Naive thymus-derived CD8-positive, alpha-beta T cell (primary cell): ENCODE measurements at regions of chr5 and their contacts with region 1.

Region 1: GRCh38 chr5:79235634-79236363 is at the start of gene JMY:
- DNase-seq: peak; percentile 76 to 93 (median 86)
- ATAC-seq: peak; percentile 81 to 84
- H3K4me3 Mint-ChIP-seq: peak within 1 kb of the TSS; percentile 86 to 99 (median 96)
- H3K27ac Mint-ChIP-seq: peak within 1 kb of the TSS; percentile 93 to 99 (median 97)
- H3K4me1 Mint-ChIP-seq: peaks cover 10 to 35% (median 28%) of the 10 kb centered on the region in 4 donors
- H3K27me3 Mint-ChIP-seq: no peaks in the 10 kb centered on the region
- polyA plus RNA-seq, gene JMY: 5.3 to 5.7 (median 5.6) TPM

Region 2: GRCh38 chr5:78984439-78985115 is 251.2 kb before region 1 on chr5:
- POLR2A ChIA-PET with region 1: interaction called, 17 read pairs
- DNase-seq: peak; percentile 57 to 83 (median 72)
- ATAC-seq: peak; percentile 72 to 82
- H3K4me3 Mint-ChIP-seq: peak overlapping the region; percentile 87 to 96 (median 91)
- H3K27ac Mint-ChIP-seq: peak overlapping the region; percentile 90 to 96 (median 95)
- H3K4me1 Mint-ChIP-seq: peaks cover 11 to 43% (median 20%) of the 10 kb centered on the region in 4 donors
- H3K27me3 Mint-ChIP-seq: no peaks in the 10 kb centered on the region

Region 3: DNA sequence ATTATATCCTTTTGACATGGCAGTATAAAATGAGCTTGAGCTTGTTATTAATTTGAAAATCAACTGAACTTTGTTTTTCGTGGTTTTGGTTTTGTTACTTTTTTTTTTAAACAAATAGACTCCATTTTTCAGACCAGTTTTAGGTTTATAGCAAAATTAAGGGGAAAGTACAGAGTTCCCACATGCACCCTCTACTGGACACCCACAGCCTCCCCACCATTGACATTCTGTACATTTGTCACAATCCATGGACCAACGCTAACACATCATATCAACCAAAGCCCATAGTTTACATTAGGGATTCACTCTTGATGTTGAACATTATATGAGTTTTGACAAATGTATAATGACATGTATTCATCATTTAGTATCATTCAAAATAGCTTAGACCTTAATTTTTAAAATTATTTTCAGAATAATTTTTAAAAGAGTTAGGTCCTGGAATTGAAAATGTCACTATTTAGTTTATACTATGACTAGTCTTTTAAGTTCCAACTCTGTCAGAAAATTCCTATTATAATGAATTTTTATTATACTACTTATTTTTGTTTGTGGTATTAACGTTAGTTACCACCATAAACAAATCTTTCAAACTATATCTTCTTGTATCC is 35.1 kb before region 1 on chr5:
- POLR2A ChIA-PET with region 1: no interaction called
- DNase-seq: peak in 1 of 10 donors; percentile 4
- ATAC-seq: peak; percentile 49 to 56
- H3K4me3 Mint-ChIP-seq: no peak overlapping the region
- H3K27ac Mint-ChIP-seq: no peak overlapping the region
- H3K4me1 Mint-ChIP-seq: no peaks in the 10 kb centered on the region
- H3K27me3 Mint-ChIP-seq: no peaks in the 10 kb centered on the region

Region 4: DNA sequence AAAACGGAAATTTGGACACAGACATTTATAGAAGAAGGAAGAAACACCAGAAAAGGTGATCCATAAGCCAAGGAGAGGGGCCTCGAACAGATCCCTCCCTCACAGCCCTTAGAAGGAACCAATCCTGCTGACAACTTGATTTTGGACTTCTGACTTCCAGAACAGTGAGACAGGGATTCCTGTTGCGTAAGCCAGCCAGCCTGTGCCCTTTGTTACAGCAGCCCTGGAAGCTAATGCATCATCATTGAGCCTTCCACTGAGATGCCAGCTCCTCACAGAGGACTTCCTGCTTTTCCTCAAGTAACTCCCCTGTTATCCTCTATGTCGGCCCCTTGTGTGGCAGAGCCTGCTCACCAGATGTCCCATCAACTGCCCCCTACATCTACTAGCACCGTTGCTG is 94.3 kb after region 1 on chr5:
- POLR2A ChIA-PET with region 1: no interaction called
- DNase-seq: no peak
- ATAC-seq: no peak
- H3K4me3 Mint-ChIP-seq: no peak overlapping the region
- H3K27ac Mint-ChIP-seq: no peak overlapping the region
- H3K4me1 Mint-ChIP-seq: peaks cover 0 to 2% (median 0%) of the 10 kb centered on the region in 4 donors
- H3K27me3 Mint-ChIP-seq: peaks cover 0 to 11% (median 0%) of the 10 kb centered on the region in 5 donors